AG04450 (cell line): ENCODE measurements at regions of chr22 and their contacts with region 1.

Region 1: DNA sequence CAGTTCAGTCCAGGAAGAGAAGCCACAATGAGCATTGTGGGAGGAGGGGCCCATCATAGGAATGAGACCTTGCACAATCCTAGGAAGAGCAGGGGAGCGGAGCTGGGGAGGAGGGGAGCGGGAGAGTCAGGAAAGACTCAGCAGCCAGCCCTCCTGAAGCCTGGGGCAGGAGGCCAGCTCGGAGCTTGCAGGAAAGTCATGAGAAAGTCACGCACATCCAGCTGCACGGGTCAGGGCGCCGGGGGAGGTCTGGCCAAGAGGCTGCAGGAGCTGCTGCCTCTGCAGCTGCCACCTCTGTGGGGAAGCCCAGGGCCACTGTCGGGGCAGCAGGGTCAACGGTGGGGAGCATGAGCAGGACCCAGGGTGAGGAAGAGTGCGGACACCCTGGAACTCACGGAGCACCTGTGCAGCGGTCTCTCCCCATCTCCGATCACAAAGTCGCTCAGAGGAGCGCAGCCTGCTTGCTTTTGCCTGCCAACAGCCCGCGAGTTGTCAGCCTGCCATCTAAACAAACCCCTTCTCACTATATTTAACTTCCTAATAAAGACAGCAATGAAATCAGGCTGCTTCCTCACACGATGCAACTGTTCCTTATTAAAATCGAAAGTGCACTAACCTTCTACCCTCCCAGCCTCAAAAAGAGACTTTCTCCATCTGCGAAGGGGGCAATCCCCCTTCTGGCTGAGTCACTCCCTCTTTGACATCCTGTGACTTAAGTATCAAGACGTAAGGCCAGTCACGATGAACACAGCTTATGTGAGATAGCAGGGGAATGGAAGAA is 52.9 kb upstream of the RTL6 start:
- DNase-seq: peak; percentile 91
- H3K4me3 ChIP-seq: peak overlapping the region; percentile 62
- H3K27ac ChIP-seq: peak overlapping the region; percentile 92
- H3K27me3 ChIP-seq: no peaks in the 10 kb centered on the region
- CTCF ChIP-seq: no peak

Region 2: GRCh38 chr22:44473166-44473565 is 77.7 kb before region 1 on chr22:
- CTCF ChIA-PET with region 1: no interaction called
- POLR2A ChIA-PET with region 1: no interaction called
- DNase-seq: no peak
- H3K4me3 ChIP-seq: no peak overlapping the region
- H3K27ac ChIP-seq: no peak overlapping the region
- H3K27me3 ChIP-seq: peaks cover 5% of the 10 kb centered on the region
- CTCF ChIP-seq: no peak

Region 3: GRCh38 chr22:44523981-44524759 is 26.7 kb before region 1 on chr22:
- CTCF ChIA-PET with region 1: interaction called, 3 read pairs
- POLR2A ChIA-PET with region 1: interaction called, 38 read pairs
- DNase-seq: peak; percentile 96
- H3K4me3 ChIP-seq: peak overlapping the region; percentile 31
- H3K27ac ChIP-seq: peak overlapping the region; percentile 99
- H3K27me3 ChIP-seq: no peaks in the 10 kb centered on the region
- CTCF ChIP-seq: no peak

Region 4: DNA sequence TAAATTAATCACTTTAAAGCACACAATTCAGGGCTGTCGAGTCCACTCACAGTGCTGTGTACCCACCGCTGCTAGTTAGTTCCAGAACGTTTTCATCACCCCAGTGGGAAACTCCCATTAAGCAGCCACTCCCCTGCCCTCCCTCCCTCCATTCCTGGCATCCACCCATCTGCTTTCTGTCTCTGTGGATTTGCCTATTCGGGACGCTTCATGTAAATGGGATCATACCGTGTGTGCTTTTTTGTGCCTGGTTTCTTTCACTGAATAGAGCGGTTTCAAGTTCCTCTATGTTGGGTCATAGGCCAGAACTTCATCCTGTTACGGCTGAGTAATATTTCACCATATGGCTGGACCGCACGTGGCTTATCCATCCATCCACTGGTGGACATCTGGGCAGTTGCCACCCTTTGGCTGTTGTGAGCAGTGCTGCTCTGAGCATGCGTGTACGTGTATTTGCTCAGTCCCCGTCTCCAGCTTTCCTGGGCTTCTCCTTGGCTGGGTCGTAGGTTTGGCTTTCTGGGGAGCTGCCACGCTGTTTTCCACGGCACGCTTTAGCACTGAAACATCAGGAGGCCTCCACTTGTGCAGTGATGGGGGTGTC is 231.6 kb after region 1 on chr22:
- CTCF ChIA-PET with region 1: no interaction called
- POLR2A ChIA-PET with region 1: no interaction called
- DNase-seq: no peak
- H3K4me3 ChIP-seq: no peak overlapping the region
- H3K27ac ChIP-seq: no peak overlapping the region
- H3K27me3 ChIP-seq: peaks cover 12% of the 10 kb centered on the region
- CTCF ChIP-seq: no peak